Right cardiac atrium (tissue), 5 donors: ENCODE measurements at regions of chr5 and their contacts with region 1.

Region 1: GRCh38 chr5:73454351-73455036 is 5.9 kb upstream of the FOXD1 start:
- DNase-seq: no peak
- ATAC-seq: peak; percentile 41 to 59
- H3K4me3 ChIP-seq: no peak overlapping the region
- H3K27ac ChIP-seq: no peak overlapping the region
- H3K4me1 ChIP-seq: no peaks in the 10 kb centered on the region
- H3K27me3 ChIP-seq: no peaks in the 10 kb centered on the region

Region 2: DNA sequence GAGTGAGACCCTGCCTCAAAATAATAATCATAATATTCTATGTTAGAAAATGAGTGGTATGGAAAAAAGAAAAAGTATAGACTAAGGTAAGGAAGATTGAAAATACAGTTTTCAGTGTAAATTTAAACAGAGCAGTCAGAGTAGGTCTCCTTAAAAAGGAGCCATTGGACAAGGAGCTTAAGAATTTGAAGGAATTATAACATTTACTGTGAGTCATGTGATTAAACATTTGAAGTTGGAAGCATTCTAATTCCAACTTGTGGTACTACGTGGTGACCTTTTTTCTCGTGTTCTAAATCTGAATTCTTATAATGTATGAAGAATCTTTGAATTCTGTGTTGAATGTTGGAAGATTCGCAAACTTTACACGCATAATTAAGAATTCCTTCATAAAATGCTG is 373.4 kb before region 1 on chr5:
- intact Hi-C with region 1: loop called in 1 of 4 experiments (anchors 5 kb)
- DNase-seq: no peak
- ATAC-seq: no peak
- H3K4me3 ChIP-seq: no peak overlapping the region
- H3K27ac ChIP-seq: no peak overlapping the region
- H3K4me1 ChIP-seq: no peaks in the 10 kb centered on the region
- H3K27me3 ChIP-seq: no peaks in the 10 kb centered on the region

Region 3: DNA sequence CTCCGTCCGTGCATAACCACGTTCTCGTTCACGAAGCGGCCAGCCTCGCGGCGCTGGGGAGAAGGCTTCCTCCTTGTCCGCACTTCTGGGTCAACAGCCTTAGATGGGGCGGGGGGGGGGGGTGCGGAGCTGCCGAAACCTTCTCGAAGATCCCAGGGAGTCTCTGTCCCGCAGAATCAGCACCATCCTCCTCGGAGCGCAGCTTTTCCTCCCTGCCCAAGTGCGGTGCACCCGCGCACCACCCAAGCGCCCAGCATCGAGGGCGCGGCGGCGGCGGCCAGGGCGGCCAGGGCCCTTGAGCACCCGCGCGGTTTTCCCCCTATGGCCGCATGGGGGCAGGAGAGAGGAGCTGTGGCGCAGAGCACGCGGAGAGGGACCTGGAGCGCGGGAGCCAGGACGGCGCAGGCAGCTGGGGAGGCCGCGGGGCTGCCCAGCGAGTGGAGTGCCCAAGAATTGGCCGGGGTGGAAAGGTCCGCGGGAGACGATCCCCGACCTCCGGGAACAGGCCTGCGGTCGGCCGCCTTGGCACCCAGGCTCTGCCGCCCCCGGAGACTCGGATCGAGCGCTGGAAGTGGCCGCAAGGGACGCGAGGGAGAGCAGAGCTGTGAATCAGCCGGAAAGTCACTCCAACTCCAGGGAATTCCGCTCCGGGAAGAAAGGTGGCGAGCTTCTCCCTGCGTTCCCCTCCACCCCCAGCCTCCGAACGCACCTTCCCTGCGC is 238.4 kb before region 1 on chr5:
- intact Hi-C with region 1: loop called in 2 of 4 experiments (anchors 5 to 10 kb)
- DNase-seq: peak; percentile 77 to 89 (median 88)
- ATAC-seq: peak; percentile 99
- H3K4me3 ChIP-seq: peak overlapping the region; percentile 4
- H3K27ac ChIP-seq: no peak overlapping the region
- H3K4me1 ChIP-seq: no peaks in the 10 kb centered on the region
- H3K27me3 ChIP-seq: peaks cover 7% of the 10 kb centered on the region

Region 4: GRCh38 chr5:73596705-73597328 is 142.3 kb after region 1 on chr5:
- intact Hi-C with region 1: no loop called
- DNase-seq: no peak
- ATAC-seq: no peak
- H3K4me3 ChIP-seq: no peak overlapping the region
- H3K27ac ChIP-seq: no peak overlapping the region
- H3K4me1 ChIP-seq: no peaks in the 10 kb centered on the region
- H3K27me3 ChIP-seq: no peaks in the 10 kb centered on the region